ENCODE measurements at regions of chr6 and their contacts with region 1.

Region 1: GRCh38 chr6:27864906-27865849 is 47.0 kb downstream of the OR2B2 start:
- DNase-seq: peak; percentile 68
- ATAC-seq: peak; percentile 85
- H3K4me3 Mint-ChIP-seq: peak overlapping the region; percentile 98
- H3K27ac Mint-ChIP-seq: peak overlapping the region; percentile 99
- H3K4me1 Mint-ChIP-seq: peaks cover 48% of the 10 kb centered on the region
- H3K27me3 Mint-ChIP-seq: no peaks in the 10 kb centered on the region
- CTCF ChIP-seq: no peak

Region 2: DNA sequence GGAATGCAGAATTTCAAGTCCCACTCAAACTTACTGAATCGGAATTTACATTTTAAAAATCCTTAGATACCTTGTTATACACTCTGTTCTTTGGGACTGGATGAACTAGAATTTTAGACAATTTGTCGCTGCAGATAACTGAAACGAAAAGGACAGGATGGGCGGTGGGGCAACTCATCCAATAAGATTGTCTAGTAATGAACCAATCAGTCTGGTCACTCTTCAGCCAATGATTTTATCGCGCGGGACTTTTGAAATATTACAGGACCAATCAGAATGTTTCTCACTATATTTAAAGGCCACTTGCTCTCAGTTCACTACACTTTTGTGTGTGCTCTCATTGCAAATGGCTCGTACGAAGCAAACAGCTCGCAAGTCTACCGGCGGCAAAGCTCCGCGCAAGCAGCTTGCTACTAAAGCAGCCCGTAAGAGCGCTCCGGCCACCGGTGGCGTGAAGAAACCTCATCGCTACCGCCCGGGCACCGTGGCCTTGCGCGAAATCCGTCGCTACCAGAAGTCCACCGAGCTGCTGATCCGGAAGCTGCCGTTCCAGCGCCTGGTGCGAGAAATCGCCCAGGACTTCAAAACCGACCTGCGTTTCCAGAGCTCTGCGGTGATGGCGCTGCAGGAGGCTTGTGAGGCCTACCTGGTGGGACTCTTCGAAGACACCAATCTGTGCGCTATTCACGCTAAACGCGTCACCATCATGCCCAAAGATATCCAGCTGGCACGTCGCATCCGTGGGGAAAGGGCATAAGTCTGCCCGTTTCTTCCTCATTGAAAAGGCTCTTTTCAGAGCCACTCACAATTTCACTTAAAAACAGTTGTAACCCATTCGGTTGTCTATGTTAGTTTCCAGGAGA is 1819.9 kb before region 1 on chr6:
- CTCF ChIA-PET with region 1: no interaction called
- POLR2A ChIA-PET with region 1: interaction called, 14 read pairs
- intact Hi-C with region 1: no loop called
- DNase-seq: peak; percentile 51
- ATAC-seq: peak; percentile 58
- H3K4me3 Mint-ChIP-seq: peak overlapping the region; percentile 91
- H3K27ac Mint-ChIP-seq: peak overlapping the region; percentile 99
- H3K4me1 Mint-ChIP-seq: peaks cover 24% of the 10 kb centered on the region
- H3K27me3 Mint-ChIP-seq: no peaks in the 10 kb centered on the region
- CTCF ChIP-seq: no peak

Region 3: GRCh38 chr6:26234421-26235296 is 1630.5 kb before region 1 on chr6:
- CTCF ChIA-PET with region 1: no interaction called
- POLR2A ChIA-PET with region 1: interaction called, 17 read pairs
- intact Hi-C with region 1: no loop called
- DNase-seq: peak; percentile 49
- ATAC-seq: peak; percentile 77
- H3K4me3 Mint-ChIP-seq: peak overlapping the region; percentile 89
- H3K27ac Mint-ChIP-seq: peak overlapping the region; percentile 97
- H3K4me1 Mint-ChIP-seq: peaks cover 26% of the 10 kb centered on the region
- H3K27me3 Mint-ChIP-seq: no peaks in the 10 kb centered on the region
- CTCF ChIP-seq: no peak

Region 4: GRCh38 chr6:26596579-26597388 is 1268.4 kb before region 1 on chr6 and contains the start of gene ABT1:
- CTCF ChIA-PET with region 1: no interaction called
- POLR2A ChIA-PET with region 1: no interaction called
- intact Hi-C with region 1: loop called (anchors 10 kb)
- DNase-seq: peak; percentile 91
- ATAC-seq: peak; percentile 90
- H3K4me3 Mint-ChIP-seq: no peak within 1 kb of the TSS
- H3K27ac Mint-ChIP-seq: no peak within 1 kb of the TSS
- H3K4me1 Mint-ChIP-seq: peaks cover 17% of the 10 kb centered on the region
- H3K27me3 Mint-ChIP-seq: peaks cover 5% of the 10 kb centered on the region
- CTCF ChIP-seq: no peak
- total RNA-seq, gene ABT1: 30.7 and 30.8 TPM in 2 replicates

Region 5: DNA sequence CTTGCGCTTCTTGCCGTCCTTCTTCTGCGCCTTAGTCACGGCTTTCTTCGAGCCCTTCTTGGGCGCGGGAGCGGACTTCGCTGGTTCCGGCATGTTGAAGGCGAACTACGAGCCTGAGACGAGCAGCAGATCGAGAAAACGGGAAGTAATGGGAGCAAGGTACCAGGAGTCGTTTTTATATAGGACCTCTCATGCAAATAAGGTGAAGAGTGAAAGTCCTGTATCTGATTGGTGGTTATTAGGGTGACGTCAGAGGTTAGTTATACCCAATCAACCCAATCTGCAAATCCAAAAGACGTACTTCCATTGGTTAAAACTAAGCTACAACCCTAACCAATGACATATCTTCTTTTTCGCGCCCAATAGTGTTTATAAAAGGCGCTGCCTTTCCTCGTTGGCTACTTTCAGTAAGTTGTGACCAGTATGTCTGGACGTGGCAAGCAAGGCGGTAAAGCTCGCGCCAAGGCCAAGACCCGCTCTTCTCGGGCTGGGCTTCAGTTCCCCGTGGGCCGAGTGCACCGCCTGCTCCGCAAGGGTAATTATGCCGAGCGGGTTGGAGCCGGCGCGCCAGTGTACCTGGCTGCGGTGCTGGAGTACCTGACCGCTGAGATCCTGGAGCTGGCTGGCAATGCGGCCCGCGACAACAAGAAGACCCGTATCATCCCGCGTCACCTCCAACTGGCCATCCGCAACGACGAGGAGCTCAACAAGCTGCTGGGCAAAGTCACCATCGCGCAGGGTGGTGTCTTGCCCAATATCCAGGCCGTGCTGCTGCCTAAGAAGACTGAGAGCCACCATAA is 718.3 kb before region 1 on chr6:
- CTCF ChIA-PET with region 1: no interaction called
- POLR2A ChIA-PET with region 1: interaction called, 156 read pairs
- intact Hi-C with region 1: no loop called
- DNase-seq: peak; percentile 70
- ATAC-seq: peak; percentile 80
- H3K4me3 Mint-ChIP-seq: no peak overlapping the region
- H3K27ac Mint-ChIP-seq: no peak overlapping the region
- H3K4me1 Mint-ChIP-seq: peaks cover 26% of the 10 kb centered on the region
- H3K27me3 Mint-ChIP-seq: no peaks in the 10 kb centered on the region
- CTCF ChIP-seq: no peak

Region 6: DNA sequence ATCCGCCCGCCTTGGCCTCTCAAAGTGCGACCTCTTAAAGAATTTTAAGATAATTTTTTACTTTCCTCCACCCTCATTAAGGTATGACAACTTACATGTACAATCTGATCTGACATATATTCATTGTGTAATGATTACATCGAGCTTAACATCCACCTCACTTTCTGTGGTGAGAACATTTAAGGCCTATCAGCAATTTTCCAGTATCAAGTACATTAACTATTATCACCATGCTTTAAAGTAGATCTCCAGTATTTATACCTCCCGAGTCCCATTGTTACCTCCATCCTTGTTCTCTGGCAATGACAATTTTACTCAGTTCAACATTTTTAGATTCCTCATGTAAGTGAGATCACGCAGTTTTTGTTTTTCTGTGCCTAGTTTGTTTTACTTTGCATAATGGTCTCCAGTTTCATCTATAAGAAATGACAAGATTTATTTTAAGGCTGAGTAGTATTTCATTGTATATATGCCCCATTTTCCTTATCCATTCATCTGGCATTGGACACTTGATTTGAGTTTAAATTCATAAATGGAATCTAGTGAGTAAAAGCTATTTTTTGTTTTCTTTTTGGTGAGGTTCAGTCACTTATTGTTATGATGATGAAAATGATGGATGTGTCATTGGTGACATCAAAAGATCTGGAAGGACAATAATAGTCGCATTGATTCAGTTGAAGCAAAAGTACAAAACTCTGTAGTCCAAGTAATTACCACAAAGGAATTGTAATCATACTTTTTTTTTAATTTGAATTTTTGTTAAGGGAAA is 40.0 kb before region 1 on chr6:
- CTCF ChIA-PET with region 1: no interaction called
- POLR2A ChIA-PET with region 1: interaction called, 1,167 read pairs
- intact Hi-C with region 1: no loop called
- DNase-seq: no peak
- ATAC-seq: no peak
- H3K4me3 Mint-ChIP-seq: peak overlapping the region; percentile 96
- H3K27ac Mint-ChIP-seq: peak overlapping the region; percentile 99
- H3K4me1 Mint-ChIP-seq: peaks cover 31% of the 10 kb centered on the region
- H3K27me3 Mint-ChIP-seq: no peaks in the 10 kb centered on the region
- CTCF ChIP-seq: no peak

Region 7: GRCh38 chr6:27940766-27941165 is 75.6 kb after region 1 on chr6:
- CTCF ChIA-PET with region 1: no interaction called
- POLR2A ChIA-PET with region 1: no interaction called
- intact Hi-C with region 1: no loop called
- DNase-seq: no peak
- ATAC-seq: no peak
- H3K4me3 Mint-ChIP-seq: no peak overlapping the region
- H3K27ac Mint-ChIP-seq: no peak overlapping the region
- H3K4me1 Mint-ChIP-seq: no peaks in the 10 kb centered on the region
- H3K27me3 Mint-ChIP-seq: peaks cover 14% of the 10 kb centered on the region
- CTCF ChIP-seq: no peak

Region 8: DNA sequence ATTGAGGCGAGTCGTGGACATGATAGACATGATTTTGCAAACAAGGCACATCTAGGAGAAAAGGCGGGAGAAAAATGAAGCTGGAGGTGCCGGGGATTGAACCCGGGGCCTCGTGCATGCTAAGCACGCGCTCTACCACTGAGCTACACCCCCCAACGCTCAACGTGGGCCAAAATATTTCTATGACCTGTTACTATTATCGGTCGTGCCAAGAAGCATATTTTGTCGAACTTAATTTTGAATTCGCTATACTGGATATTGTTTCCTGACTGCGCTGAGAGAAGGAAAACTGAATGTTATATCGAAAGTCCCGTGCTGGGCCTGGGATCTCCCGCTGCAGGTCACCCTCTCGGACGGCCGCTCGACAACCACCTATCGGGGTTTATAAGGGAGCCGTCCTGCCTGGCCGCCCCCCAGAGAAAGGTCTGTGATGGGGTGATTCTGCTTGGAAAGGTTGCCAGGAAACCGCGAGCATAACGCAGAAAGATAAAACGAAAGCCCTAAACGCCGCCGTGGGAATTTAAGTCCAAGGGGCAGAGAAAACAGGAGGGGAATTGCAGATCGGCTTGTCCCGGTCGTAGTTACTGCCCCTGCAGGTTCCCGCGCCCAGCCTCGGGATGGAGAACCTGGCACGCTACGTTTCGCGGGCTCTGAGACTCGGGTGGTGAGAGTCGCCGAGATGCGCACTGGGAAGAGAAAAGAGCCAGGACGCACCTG is 998.6 kb after region 1 on chr6:
- CTCF ChIA-PET with region 1: no interaction called
- POLR2A ChIA-PET with region 1: interaction called, 10 read pairs
- intact Hi-C with region 1: no loop called
- DNase-seq: peak; percentile 54
- ATAC-seq: peak; percentile 30
- H3K4me3 Mint-ChIP-seq: peak overlapping the region; percentile 85
- H3K27ac Mint-ChIP-seq: peak overlapping the region; percentile 90
- H3K4me1 Mint-ChIP-seq: peaks cover 27% of the 10 kb centered on the region
- H3K27me3 Mint-ChIP-seq: peaks cover 4% of the 10 kb centered on the region
- CTCF ChIP-seq: no peak

Measured in activated B cell treated with CpG ODN at 0.5 μM for 24 hours (primary cell).